Common myeloid progenitor, CD34-positive (primary cell): ENCODE measurements at regions of chr16 and their contacts with region 1.

Region 1: GRCh38 chr16:106623-107324 is 28.7 kb downstream of the MPG start:
- DNase-seq: peak; percentile 76 to 88 (median 85)
- H3K4me3 ChIP-seq: no peak overlapping the region
- H3K27ac ChIP-seq: no peak overlapping the region
- H3K4me1 ChIP-seq: peaks cover 0 to 16% (median 7%) of the 10 kb centered on the region in 4 experiments
- H3K27me3 ChIP-seq: no peaks in the 10 kb centered on the region

Region 2: GRCh38 chr16:65671-66137 is 41.1 kb before region 1 on chr16:
- CTCF ChIA-PET with region 1: interaction called, 46 read pairs
- POLR2A ChIA-PET with region 1: no interaction called
- DNase-seq: peak; percentile 77 to 87 (median 83)
- H3K4me3 ChIP-seq: no peak overlapping the region
- H3K27ac ChIP-seq: no peak overlapping the region
- H3K4me1 ChIP-seq: peaks cover 0 to 10% (median 7%) of the 10 kb centered on the region in 4 experiments
- H3K27me3 ChIP-seq: no peaks in the 10 kb centered on the region

Region 3: DNA sequence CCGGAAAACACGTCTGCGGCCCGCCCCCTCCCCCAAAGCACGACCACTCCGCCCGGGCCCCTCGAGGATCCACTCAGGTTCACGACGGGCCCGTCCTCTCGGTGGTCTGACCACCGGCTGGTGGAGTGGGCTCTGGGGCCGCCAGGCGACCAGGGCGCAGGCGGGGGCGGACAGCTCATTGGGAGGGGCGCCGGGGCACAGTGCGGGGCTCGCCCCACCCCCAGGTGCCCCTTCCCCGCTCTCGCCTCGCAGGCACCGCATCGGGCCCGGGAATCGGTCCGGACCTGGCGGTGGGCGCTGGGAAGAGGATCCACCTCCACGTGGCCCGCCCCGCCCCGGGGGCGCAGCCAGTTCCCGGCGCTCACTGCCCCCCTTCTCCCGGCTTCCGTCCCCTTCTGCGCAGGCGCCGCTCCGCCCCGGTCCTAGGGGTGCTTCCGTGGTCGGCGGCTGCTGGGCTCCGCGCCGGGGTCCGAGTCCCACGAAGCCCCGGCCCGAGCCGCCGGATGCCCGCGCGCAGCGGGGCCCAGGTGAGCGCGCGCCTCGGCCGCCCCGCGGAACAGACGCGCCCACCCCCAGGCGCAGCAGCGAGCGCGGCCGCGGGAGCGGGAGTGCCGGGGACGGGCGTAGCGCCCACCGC is 28.8 kb before region 1 on chr16 and contains the start of gene MPG:
- CTCF ChIA-PET with region 1: interaction called, 11 read pairs
- POLR2A ChIA-PET with region 1: no interaction called
- DNase-seq: peak; percentile 48 to 56 (median 55)
- H3K4me3 ChIP-seq: peak within 1 kb of the TSS; percentile 62 to 89 (median 73)
- H3K27ac ChIP-seq: peak within 1 kb of the TSS in 1 of 2 experiments; percentile 66
- H3K4me1 ChIP-seq: peaks cover 3 to 72% (median 67%) of the 10 kb centered on the region in 4 experiments
- H3K27me3 ChIP-seq: peaks cover 0 to 7% (median 2%) of the 10 kb centered on the region in 5 experiments

Region 4: DNA sequence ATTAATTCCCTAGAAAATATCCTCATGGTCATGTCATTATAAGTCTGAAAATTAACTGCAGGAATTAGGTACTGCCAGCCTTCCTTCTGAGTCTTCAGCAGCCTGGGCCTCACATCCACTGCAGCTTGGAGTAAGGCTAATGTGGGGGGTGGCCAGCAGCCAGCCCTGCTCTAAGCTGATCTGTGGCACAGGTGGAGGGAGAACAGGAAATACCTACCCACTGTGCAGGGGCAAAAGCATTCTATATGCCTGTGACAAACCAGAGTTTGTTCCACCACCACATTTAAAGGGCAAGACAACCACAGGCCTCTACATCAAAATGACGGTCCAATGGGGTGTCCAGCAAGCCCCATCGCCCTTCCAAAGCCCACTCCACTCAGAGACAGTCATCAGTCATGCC is 22.3 kb after region 1 on chr16:
- CTCF ChIA-PET with region 1: interaction called, 10 read pairs
- POLR2A ChIA-PET with region 1: no interaction called
- DNase-seq: no peak
- H3K4me3 ChIP-seq: no peak overlapping the region
- H3K27ac ChIP-seq: no peak overlapping the region
- H3K4me1 ChIP-seq: peaks cover 0 to 5% (median 1%) of the 10 kb centered on the region in 4 experiments
- H3K27me3 ChIP-seq: no peaks in the 10 kb centered on the region

Region 5: DNA sequence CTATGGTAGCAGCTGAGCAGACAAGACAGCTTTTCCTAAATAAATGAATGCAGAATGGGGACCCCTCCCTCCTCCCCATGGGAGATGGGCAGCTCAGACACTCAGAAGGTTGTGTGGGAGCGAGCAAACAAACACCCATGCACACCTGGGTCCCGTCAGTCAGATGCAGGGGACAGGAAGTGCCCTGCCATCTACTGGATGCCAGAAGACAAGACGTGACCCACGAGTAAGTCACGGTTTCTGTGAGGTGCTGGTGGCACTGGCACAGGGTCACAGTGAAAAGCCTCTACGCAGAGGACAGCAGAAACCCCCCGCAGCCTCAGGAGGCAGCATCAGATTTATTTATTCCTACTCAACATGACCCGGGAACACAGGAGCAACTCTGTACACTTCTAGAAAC is 81.9 kb after region 1 on chr16:
- CTCF ChIA-PET with region 1: interaction called, 14 read pairs
- POLR2A ChIA-PET with region 1: no interaction called
- DNase-seq: peak; percentile 22 to 50 (median 33)
- H3K4me3 ChIP-seq: no peak overlapping the region
- H3K27ac ChIP-seq: no peak overlapping the region
- H3K4me1 ChIP-seq: peaks cover 0 to 10% (median 7%) of the 10 kb centered on the region in 4 experiments
- H3K27me3 ChIP-seq: no peaks in the 10 kb centered on the region